PC-3 (cell line): ENCODE measurements at regions of chr5 and their contacts with region 1.

Region 1: DNA sequence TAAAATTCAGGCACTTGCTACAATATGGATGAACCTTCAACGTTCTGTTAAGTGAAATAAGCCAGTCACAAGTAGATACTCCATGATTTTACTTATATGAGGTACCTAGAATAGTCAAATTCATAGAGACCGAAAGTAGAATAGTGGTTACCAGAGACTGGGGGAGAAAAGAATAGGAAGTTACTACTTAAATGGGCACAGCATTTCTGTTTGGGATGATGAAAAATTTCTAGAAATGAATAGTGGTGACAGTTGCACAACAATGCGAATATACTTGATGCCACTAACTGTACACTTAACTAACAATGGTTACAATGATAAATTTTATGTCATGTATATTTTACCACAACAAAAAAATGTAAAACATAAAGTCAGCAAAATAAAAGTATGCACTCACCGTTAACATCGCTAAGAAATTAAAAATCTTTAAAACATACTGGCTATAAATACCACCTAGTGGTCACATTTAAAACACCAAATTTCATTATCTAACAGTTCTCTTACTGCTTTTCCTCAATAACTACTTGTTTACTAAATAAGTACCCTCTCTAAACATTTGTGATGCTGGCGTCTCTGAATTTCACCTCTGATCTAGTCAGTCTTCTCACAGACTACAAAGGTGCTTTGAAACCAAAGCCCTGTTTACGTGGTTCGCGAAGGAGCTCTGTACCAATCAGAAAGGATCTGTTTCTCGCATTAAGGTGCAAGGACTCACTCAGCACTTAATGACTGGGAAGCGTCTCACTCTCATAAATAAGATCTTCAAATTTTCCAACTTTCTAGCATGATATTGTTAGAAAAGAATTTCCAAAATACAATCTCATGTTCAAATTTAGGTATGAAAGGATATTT is 22.7 kb downstream of the KIF3A start:
- DNase-seq: peak; percentile 39
- ATAC-seq: no peak
- H3K4me3 ChIP-seq: no peak overlapping the region
- H3K27ac ChIP-seq: no peak overlapping the region
- H3K4me1 ChIP-seq: no peaks in the 10 kb centered on the region
- H3K27me3 ChIP-seq: no peaks in the 10 kb centered on the region
- CTCF ChIP-seq: peak; percentile 65

Region 2: DNA sequence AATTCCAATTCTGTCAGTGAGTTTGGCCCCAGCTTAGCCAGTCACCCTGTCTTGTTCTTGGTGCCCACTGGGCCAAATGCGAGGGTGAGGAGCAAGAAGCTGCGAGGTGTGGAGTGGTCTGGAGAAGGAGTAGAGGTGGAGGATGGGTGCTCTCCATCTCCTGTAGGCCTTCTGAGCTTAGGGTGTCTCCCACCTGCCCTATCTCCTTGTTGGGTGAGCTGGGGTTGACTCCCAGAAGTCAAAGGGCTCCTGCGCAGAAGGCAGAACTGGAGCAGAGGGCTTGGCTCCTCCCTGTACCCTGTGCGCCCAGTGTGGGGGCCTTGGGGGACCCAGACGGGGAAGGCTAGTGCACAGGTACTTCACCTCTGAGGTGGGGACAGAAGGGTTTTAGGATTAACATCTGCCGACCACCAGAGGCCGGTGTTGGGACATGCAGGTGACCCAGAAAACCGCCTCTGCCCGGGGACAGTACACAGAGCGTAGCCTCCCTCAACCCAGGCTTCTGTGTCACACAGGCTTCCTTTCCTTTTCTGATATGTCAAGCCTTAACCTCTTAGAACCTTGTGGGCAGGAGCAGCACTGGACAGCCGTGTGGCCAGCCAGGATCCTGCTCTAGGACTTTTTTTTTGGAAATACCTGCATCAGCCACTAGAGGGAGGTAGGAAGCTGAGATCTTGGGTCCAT is 188.2 kb before region 1 on chr5:
- CTCF ChIA-PET with region 1: no interaction called
- POLR2A ChIA-PET with region 1: no interaction called
- intact Hi-C with region 1: loop called (anchors 10 kb)
- DNase-seq: peak; percentile 79
- ATAC-seq: peak; percentile 88
- H3K4me3 ChIP-seq: peak overlapping the region; percentile 49; the same call in 1 of the 2 replicates
- H3K27ac ChIP-seq: no peak overlapping the region
- H3K4me1 ChIP-seq: no peaks in the 10 kb centered on the region
- H3K27me3 ChIP-seq: no peaks in the 10 kb centered on the region
- CTCF ChIP-seq: peak; percentile 94

Region 3: DNA sequence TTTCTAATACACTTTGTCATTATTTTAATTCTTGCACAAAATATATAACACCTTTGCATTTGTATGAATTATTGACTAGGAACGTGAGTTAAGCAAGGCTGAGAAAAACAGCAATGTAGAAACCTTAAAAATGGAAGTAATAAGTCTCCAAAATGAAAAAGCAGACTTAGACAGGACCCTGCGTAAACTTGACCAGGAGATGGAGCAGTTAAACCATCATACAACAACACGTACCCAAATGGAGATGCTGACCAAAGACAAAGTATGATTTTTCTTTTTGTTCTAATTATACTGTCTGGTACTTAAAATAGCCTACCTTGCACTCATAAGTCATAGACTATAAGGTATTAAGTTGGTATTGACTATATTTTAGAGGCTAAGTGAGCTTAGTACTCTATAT is 123.5 kb before region 1 on chr5:
- CTCF ChIA-PET with region 1: no interaction called
- POLR2A ChIA-PET with region 1: no interaction called
- intact Hi-C with region 1: loop called (anchors 2 kb)
- DNase-seq: peak; percentile 33
- ATAC-seq: peak; percentile 59
- H3K4me3 ChIP-seq: no peak overlapping the region
- H3K27ac ChIP-seq: no peak overlapping the region
- H3K4me1 ChIP-seq: no peaks in the 10 kb centered on the region
- H3K27me3 ChIP-seq: no peaks in the 10 kb centered on the region
- CTCF ChIP-seq: peak; percentile 63

Region 4: DNA sequence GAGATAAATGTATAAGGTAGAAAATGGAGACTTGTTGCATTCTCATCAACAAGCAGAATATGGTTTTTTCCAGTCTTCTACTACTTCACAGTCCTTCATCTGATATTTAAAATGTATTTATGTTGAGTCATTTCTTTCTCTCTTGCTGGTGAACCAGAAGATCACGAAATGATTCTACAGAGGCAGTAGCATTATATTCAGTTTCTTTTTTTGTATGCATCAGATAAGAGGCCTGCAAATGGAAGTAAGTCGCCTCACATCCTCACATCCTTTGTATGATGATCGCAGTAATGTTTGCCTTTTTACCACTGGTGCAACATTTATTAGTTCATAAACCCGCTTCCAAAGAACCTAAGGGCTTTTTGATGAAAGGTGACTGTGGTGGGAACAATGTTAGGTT is 78.8 kb before region 1 on chr5:
- CTCF ChIA-PET with region 1: no interaction called
- POLR2A ChIA-PET with region 1: no interaction called
- intact Hi-C with region 1: loop called (anchors 1 kb)
- DNase-seq: no peak
- ATAC-seq: no peak
- H3K4me3 ChIP-seq: no peak overlapping the region
- H3K27ac ChIP-seq: no peak overlapping the region
- H3K4me1 ChIP-seq: no peaks in the 10 kb centered on the region
- H3K27me3 ChIP-seq: no peaks in the 10 kb centered on the region
- CTCF ChIP-seq: no peak